ENCODE measurements at regions of chr7 and their contacts with region 1.

Region 1: GRCh38 chr7:152675759-152676636 is at the start of gene XRCC2:
- DNase-seq: peak; percentile 93
- H3K4me3 Mint-ChIP-seq: peak within 1 kb of the TSS; percentile 96
- H3K27ac Mint-ChIP-seq: peak within 1 kb of the TSS; percentile 93
- H3K4me1 Mint-ChIP-seq: peaks cover 11% of the 10 kb centered on the region
- H3K27me3 Mint-ChIP-seq: no peaks in the 10 kb centered on the region
- total RNA-seq, gene XRCC2: 10.3 to 10.8 TPM

Region 2: GRCh38 chr7:152025077-152025936 is 650.7 kb before region 1 on chr7 and contains the start of gene GALNT11:
- CTCF ChIA-PET with region 1: no interaction called
- intact Hi-C with region 1: loop called (anchors 10 kb)
- DNase-seq: peak; percentile 81
- H3K4me3 Mint-ChIP-seq: peak within 1 kb of the TSS; percentile 80
- H3K27ac Mint-ChIP-seq: peak within 1 kb of the TSS; percentile 77
- H3K4me1 Mint-ChIP-seq: peaks cover 30% of the 10 kb centered on the region
- H3K27me3 Mint-ChIP-seq: no peaks in the 10 kb centered on the region
- total RNA-seq, gene GALNT11: 15.6 to 19.8 TPM

Region 3: GRCh38 chr7:152436111-152436930 is 239.7 kb before region 1 on chr7:
- CTCF ChIA-PET with region 1: no interaction called
- intact Hi-C with region 1: loop called (anchors 1 kb)
- DNase-seq: peak; percentile 88
- H3K4me3 Mint-ChIP-seq: peak overlapping the region; percentile 74
- H3K27ac Mint-ChIP-seq: peak overlapping the region; percentile 78
- H3K4me1 Mint-ChIP-seq: peaks cover 22% of the 10 kb centered on the region
- H3K27me3 Mint-ChIP-seq: no peaks in the 10 kb centered on the region

Region 4: GRCh38 chr7:152512706-152513105 is 163.3 kb before region 1 on chr7:
- CTCF ChIA-PET with region 1: no interaction called
- intact Hi-C with region 1: loop called (anchors 2 kb)
- DNase-seq: peak; percentile 54
- H3K4me3 Mint-ChIP-seq: peak overlapping the region; percentile 38
- H3K27ac Mint-ChIP-seq: no peak overlapping the region
- H3K4me1 Mint-ChIP-seq: peaks cover 8% of the 10 kb centered on the region
- H3K27me3 Mint-ChIP-seq: no peaks in the 10 kb centered on the region

Region 5: DNA sequence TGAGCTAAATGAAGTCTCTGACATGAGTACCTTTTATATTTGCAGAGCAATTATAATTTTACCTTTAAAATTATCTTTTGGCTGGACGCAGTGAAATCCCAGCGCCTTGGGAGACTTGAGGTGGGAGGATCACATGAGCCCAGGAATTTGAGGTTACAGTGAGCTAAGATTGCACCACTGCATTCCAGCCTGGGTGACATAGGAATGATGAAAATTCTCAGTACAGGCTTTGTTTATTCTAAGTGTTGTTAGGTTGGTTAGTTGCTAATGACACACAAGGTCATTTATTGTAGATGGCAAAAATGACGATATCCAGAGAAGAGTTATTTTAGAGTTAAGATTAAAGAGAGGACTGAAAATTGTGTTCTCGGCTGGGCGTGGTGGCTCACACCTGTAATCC is 87.6 kb before region 1 on chr7:
- CTCF ChIA-PET with region 1: no interaction called
- intact Hi-C with region 1: no loop called
- DNase-seq: no peak
- H3K4me3 Mint-ChIP-seq: no peak overlapping the region
- H3K27ac Mint-ChIP-seq: no peak overlapping the region
- H3K4me1 Mint-ChIP-seq: no peaks in the 10 kb centered on the region
- H3K27me3 Mint-ChIP-seq: no peaks in the 10 kb centered on the region

Measured in activated naive CD4-positive, alpha-beta T cell treated with anti-CD3 and anti-CD28 coated beads for 36 hours (primary cell).